CD4-positive, alpha-beta T cell (primary cell): ENCODE measurements at regions of chr5 and their contacts with region 1.

Region 1: DNA sequence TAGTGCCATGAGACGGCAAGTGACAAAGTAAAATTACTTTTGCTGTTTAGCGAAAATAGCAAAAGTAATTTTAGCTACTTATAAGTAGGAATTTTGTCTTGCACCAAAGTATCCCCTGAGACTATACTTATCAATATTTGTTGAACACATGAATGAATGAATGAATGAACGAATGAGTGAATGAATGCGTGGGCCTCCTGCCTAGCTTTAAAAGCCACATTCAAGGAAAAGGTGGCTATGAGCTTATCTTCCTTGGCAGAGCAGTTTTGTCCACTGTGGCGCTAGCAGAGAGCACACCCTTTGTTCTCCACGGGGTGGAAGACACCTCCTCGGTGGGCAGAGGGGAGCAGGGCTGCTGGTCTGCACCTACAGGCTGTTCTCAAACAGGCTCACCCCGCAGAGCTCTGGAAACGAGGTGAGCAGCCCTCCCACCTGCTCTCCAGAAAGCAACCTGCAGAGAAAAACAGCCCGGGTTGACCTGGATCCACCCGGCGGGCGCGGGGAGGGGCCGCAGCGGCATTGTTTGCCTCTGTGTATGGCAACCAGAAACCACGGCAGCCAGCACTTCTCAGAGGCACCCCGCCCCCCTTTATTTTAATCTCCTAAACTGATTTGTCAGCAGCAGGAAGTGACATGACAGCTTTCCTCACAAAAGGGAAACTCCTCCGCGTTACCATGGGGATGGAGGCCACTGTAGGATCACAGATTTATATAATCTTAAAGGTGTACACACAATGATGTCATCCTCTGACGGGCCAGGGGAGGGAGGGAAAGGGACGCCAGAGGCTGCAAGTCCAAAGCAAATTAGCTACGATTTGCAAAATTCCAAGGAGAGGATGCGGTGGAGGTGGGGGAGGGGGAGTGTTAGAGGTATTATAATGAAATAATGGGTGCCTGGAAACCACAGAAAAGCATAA is 5.9 kb downstream of the DUSP1 start:
- DNase-seq: peak; percentile 87 to 100 (median 94)
- ATAC-seq: peak; percentile 75
- H3K4me3 ChIP-seq: peak overlapping the region; percentile 44
- H3K4me3 Mint-ChIP-seq: peak overlapping the region; percentile 71
- H3K27ac ChIP-seq: peak overlapping the region; percentile 89
- H3K27ac Mint-ChIP-seq: peak overlapping the region; percentile 95
- H3K4me1 ChIP-seq: peaks cover 59% of the 10 kb centered on the region
- H3K4me1 Mint-ChIP-seq: peaks cover 55% of the 10 kb centered on the region
- H3K27me3 ChIP-seq: no peaks in the 10 kb centered on the region
- H3K27me3 Mint-ChIP-seq: no peaks in the 10 kb centered on the region
- CTCF ChIP-seq: no peak

Region 2: DNA sequence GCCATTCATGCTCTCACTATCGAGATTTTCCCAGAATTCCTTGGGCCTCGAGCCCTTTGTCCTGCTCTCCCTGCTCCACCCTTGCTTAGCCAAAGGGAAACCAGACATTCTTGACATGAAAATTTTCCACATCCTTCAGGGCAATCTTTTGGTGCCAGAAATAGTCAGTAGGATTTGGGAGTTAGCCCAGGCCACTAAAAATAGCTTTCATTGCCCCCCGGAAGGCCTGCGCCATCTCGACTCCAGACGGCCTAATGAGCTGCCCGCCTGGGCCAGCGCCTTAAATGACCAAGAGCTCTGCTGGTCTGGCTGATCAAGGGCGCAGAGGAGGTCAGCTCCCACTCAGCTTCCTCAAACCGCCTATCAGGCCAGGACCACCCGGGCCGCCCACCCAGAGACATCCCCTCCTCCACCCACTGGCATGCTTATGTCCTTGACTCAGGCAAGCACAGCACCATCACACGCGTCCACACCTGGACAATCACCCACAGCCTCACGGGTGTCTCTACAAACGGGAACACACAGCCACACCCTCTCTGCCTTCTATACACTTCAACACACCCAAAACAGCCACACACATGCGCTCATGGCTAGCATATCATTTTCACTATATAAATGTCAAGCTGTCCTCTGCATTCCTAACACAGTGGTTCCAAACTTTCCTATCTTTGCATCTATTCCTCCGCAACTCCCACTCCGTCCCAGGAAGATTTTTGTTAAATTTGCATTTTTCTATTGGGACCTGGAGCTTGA is 15.1 kb before region 1 on chr5:
- CTCF ChIA-PET with region 1: no interaction called
- POLR2A ChIA-PET with region 1: interaction called, 13 read pairs
- intact Hi-C with region 1: no loop called
- DNase-seq: no peak
- ATAC-seq: no peak
- H3K4me3 ChIP-seq: no peak overlapping the region
- H3K4me3 Mint-ChIP-seq: no peak overlapping the region
- H3K27ac ChIP-seq: no peak overlapping the region
- H3K27ac Mint-ChIP-seq: no peak overlapping the region
- H3K4me1 ChIP-seq: peaks cover 3% of the 10 kb centered on the region
- H3K4me1 Mint-ChIP-seq: no peaks in the 10 kb centered on the region
- H3K27me3 ChIP-seq: no peaks in the 10 kb centered on the region
- H3K27me3 Mint-ChIP-seq: no peaks in the 10 kb centered on the region
- CTCF ChIP-seq: no peak

Region 3: DNA sequence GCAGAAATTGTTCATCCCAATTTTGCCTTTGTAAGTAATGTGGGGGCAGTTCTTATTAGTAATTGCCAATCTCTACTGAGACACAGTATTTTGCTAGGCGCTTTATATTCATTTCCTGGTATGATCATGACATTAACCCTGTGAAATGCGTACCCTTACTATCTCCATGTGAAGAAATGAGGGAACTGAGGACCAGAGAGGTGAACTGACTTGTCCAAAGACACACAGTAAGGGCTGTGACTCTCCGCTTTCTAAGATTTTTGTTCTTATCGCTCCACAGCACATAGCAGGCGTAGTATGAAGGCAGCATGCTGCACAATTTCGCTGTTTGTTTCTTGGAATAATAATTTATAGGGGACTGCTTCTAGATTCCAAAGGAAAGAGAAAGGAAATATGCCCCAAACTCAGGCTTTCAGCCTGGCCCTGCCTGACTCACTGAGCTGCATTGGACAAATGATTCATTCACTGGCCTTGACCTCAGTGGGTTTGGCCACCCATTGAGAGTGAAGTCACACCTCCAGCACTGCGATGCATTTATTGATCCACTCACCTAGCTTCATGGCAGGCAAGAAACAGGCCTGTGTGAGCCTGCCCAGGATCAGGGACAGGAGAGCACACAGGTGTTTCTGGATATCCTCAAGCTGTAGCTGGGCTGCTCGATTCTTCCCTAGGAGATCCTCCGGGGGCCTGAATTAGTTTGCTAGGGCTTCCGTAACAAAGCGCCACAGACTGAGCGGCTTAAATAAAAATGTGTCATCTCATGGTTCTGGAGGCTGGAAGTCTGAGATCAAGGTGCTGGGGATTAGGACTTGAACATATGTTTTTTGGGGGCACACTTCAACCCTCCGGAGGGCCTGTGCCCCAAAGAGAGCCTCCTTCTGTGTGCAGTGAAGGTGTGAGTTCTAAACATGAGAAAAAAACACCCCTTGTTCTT is 13.0 kb after region 1 on chr5:
- CTCF ChIA-PET with region 1: interaction called, 6 read pairs
- POLR2A ChIA-PET with region 1: interaction called, 36 read pairs
- intact Hi-C with region 1: no loop called
- DNase-seq: peak in 3 of 14 experiments; percentile 22 to 64 (median 54)
- ATAC-seq: peak; percentile 56
- H3K4me3 ChIP-seq: peak overlapping the region; percentile 27
- H3K4me3 Mint-ChIP-seq: peak overlapping the region; percentile 68
- H3K27ac ChIP-seq: peak overlapping the region; percentile 68 to 93
- H3K27ac Mint-ChIP-seq: peak overlapping the region; percentile 95
- H3K4me1 ChIP-seq: peaks cover 43% of the 10 kb centered on the region
- H3K4me1 Mint-ChIP-seq: peaks cover 45% of the 10 kb centered on the region
- H3K27me3 ChIP-seq: no peaks in the 10 kb centered on the region
- H3K27me3 Mint-ChIP-seq: no peaks in the 10 kb centered on the region
- CTCF ChIP-seq: no peak

Region 4: GRCh38 chr5:172833686-172834414 is 68.7 kb after region 1 on chr5 and contains the start of gene ERGIC1:
- CTCF ChIA-PET with region 1: no interaction called
- POLR2A ChIA-PET with region 1: interaction called, 110 read pairs
- intact Hi-C with region 1: no loop called
- DNase-seq: peak; percentile 17 to 83 (median 52)
- ATAC-seq: peak; percentile 66
- H3K4me3 ChIP-seq: peak within 1 kb of the TSS; percentile 83
- H3K4me3 Mint-ChIP-seq: peak within 1 kb of the TSS; percentile 95
- H3K27ac ChIP-seq: peak within 1 kb of the TSS; percentile 41 to 78
- H3K27ac Mint-ChIP-seq: peak within 1 kb of the TSS; percentile 88
- H3K4me1 ChIP-seq: peaks cover 49% of the 10 kb centered on the region
- H3K4me1 Mint-ChIP-seq: peaks cover 45% of the 10 kb centered on the region
- H3K27me3 ChIP-seq: no peaks in the 10 kb centered on the region
- H3K27me3 Mint-ChIP-seq: no peaks in the 10 kb centered on the region
- CTCF ChIP-seq: no peak
- total RNA-seq, gene ERGIC1: 51.0 to 52.4 TPM